ENCODE measurements at regions of chr6 and their contacts with region 1.

Region 1: GRCh38 chr6:27312146-27312949 is at the start of gene POM121L2:
- DNase-seq: peak; percentile 78
- H3K4me3 Mint-ChIP-seq: peak within 1 kb of the TSS; percentile 74
- H3K27ac Mint-ChIP-seq: no peak within 1 kb of the TSS
- H3K4me1 Mint-ChIP-seq: peaks cover 5% of the 10 kb centered on the region
- H3K27me3 Mint-ChIP-seq: peaks cover 53% of the 10 kb centered on the region
- total RNA-seq, gene POM121L2: not detected

Region 2: GRCh38 chr6:27157459-27158315 is 154.7 kb before region 1 on chr6:
- CTCF ChIA-PET with region 1: interaction called, 3 read pairs
- POLR2A ChIA-PET with region 1: no interaction called
- intact Hi-C with region 1: loop called (anchors 5 kb)
- DNase-seq: peak; percentile 91
- H3K4me3 Mint-ChIP-seq: peak overlapping the region; percentile 66
- H3K27ac Mint-ChIP-seq: peak overlapping the region; percentile 77
- H3K4me1 Mint-ChIP-seq: peaks cover 45% of the 10 kb centered on the region
- H3K27me3 Mint-ChIP-seq: no peaks in the 10 kb centered on the region

Region 3: DNA sequence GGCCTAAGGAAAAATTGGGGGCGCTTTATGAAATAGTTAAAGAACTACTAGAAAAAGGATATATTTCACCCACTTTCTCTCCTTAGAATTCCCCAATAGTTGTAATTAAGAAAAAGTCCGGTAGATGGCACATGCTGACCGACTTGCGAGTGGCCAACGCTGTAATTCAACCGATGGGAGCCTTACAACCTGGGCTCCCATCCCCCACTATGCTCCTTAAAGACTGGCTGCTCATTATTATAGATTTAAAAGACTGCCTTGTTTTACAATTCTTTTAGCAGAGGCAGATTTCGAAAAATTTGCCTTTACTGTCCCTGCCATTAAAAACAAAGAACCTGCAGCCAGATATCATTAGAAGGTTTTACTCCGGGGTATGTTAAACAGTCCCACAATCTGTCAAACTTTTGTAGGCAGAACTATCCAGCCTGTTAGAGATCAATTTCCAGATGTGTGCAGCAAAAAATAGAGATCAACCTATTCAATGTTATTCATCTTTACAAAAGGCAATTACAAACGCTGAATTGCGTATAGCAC is 123.4 kb before region 1 on chr6:
- CTCF ChIA-PET with region 1: no interaction called
- POLR2A ChIA-PET with region 1: no interaction called
- intact Hi-C with region 1: loop called (anchors 1 kb)
- DNase-seq: peak; percentile 61
- H3K4me3 Mint-ChIP-seq: peak overlapping the region; percentile 78
- H3K27ac Mint-ChIP-seq: peak overlapping the region; percentile 8
- H3K4me1 Mint-ChIP-seq: peaks cover 6% of the 10 kb centered on the region
- H3K27me3 Mint-ChIP-seq: no peaks in the 10 kb centered on the region

Region 4: DNA sequence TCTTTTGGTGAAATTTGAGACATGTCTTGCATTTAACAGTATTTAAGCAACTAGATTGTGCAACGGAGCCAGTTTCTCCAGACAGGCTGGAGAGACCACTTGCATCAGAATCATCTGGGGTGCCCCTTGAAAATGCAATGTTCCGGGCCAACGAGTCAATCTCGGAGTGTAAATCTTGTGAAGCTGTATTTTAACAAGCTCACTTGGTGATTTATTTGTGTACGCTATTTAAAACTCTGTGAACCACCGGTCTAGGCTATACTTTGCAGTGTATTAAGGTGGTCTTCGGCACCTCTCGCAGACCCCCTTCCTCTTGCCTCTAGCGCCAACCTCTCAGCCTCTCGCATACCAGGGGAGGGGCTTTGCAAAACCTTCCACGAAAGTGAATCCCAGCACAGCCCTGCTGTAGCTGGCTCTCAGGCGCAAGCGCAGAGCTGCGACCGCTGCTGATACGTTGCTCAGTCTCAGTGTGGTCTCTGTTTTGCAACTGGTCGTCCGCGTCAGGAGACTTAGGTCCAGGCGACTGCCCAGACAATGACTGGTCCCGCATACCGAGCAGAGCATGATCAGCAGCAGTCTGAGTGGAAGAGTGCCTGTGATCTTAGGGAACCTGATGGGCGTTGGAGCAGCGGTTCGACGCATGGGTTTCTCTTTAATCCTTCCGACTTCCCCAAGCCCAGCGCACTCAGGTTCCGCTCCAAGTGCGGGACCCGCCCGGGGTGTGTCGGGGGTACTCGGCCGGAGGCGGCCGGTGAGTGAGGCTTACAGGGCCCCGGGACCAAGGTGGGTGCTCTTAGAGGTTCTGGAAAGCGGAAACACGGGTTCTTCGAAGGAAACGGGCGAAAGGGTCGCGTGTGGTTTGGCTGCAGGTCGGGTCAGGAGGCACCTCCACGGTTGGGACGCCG is 76.2 kb after region 1 on chr6 and contains the start of gene ZNF391:
- CTCF ChIA-PET with region 1: interaction called, 6 read pairs
- POLR2A ChIA-PET with region 1: interaction called, 3 read pairs
- intact Hi-C with region 1: loop called (anchors 5 kb)
- DNase-seq: peak; percentile 78
- H3K4me3 Mint-ChIP-seq: peak within 1 kb of the TSS; percentile 93
- H3K27ac Mint-ChIP-seq: peak within 1 kb of the TSS; percentile 91
- H3K4me1 Mint-ChIP-seq: peaks cover 10% of the 10 kb centered on the region
- H3K27me3 Mint-ChIP-seq: no peaks in the 10 kb centered on the region
- total RNA-seq, gene ZNF391: 2.8 to 3.2 TPM

Region 5: DNA sequence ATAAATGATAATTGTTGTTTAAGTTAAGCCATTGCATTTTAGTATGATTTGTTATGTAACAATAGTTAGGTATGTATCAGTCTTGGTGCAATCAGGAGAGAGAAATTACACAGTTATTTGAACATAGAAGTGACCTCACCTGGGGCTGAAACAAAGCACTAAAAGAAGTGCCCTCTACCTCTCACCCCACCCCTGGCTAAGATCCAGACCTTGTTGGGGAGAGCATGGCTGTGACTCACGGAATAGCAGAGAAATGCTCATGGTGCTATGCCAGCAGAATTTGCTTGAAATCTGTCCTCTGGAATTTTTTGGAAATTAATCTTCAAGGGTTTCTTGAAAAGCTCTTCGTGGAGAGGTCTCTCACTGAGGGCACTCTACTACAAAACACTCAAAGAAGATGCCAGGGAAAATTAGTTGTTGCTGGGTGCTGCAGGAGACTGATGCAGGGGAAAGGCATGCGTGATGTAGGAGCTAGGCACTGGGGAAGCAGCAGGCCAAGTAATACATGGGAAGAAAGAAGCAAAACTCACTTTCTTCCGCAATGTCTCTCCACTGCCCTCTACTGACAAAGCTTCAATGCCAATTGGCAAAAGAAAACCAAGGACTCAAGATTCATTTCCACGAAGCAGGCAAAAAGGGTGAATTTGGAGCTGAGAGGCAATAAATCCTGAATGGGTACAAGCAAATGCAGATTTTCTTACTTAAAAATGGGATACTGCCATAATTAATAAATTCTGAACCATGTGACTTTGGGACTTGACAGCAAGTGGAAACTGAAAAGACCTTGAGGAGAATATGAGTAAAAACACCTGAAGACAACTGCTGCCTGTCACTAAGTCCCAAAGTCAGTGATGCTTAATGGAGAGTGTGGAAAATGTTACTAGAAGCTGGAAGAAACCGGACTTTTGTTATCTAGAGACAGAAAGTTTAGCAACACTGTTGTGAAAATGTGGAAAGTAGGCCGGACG is 296.9 kb after region 1 on chr6:
- CTCF ChIA-PET with region 1: interaction called, 9 read pairs
- POLR2A ChIA-PET with region 1: no interaction called
- intact Hi-C with region 1: loop called (anchors 10 kb)
- DNase-seq: peak; percentile 16
- H3K4me3 Mint-ChIP-seq: no peak overlapping the region
- H3K27ac Mint-ChIP-seq: no peak overlapping the region
- H3K4me1 Mint-ChIP-seq: peaks cover 9% of the 10 kb centered on the region
- H3K27me3 Mint-ChIP-seq: peaks cover 36% of the 10 kb centered on the region

Measured in activated CD4-positive, alpha-beta memory T cell treated with anti-CD3 and anti-CD28 coated beads for 36 hours (primary cell).